ENCODE measurements at regions of chr6 and their contacts with region 1.

Region 1: DNA sequence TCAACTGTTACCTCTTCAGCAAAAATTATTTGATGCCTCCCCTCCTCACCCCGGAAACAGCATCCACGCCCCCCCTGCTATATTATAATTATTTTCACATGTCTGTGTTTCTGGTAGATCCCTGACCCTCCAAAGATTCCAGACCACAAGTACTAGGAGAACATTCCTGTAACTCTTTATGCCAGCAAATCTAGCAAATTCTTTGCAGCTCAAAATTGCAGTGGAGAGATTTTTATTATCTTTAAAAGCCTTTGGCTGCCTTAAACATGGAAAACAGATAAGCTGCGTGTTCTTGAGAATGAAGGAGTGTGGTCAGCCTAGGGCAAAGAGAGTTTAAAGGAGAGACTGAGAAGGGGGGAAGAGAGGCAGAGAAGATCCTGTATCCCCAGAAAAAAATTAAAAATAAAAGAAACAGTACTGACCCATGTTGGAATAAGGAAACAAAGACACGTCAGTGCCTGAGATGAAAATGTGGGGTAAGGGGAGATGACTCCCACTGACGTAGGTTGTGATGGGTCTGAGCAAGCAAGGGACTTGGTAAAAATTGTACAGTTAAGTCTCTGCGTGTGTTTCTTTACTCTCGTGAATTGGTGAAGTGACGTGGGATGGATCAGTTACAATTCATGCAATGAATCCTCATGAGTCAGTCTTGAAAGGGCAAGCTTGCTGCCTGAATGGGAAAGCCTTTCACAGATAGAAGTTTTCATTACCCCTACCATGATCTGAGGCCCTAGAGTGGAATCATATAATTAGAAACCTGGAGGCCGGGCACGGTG is 8.3 kb downstream of the ID4 start:
- DNase-seq: no peak
- ATAC-seq: peak; percentile 58 to 76
- H3K4me3 ChIP-seq: no peak overlapping the region
- H3K27ac ChIP-seq: peak overlapping the region; percentile 81
- H3K4me1 ChIP-seq: peaks cover 3% of the 10 kb centered on the region
- H3K27me3 ChIP-seq: no peaks in the 10 kb centered on the region

Region 2: GRCh38 chr6:19812512-19813119 is 32.8 kb before region 1 on chr6:
- intact Hi-C with region 1: loop called in 1 of 4 experiments (anchors 5 kb)
- DNase-seq: no peak
- ATAC-seq: peak; percentile 72 to 74
- H3K4me3 ChIP-seq: no peak overlapping the region
- H3K27ac ChIP-seq: no peak overlapping the region
- H3K4me1 ChIP-seq: no peaks in the 10 kb centered on the region
- H3K27me3 ChIP-seq: no peaks in the 10 kb centered on the region

Region 3: DNA sequence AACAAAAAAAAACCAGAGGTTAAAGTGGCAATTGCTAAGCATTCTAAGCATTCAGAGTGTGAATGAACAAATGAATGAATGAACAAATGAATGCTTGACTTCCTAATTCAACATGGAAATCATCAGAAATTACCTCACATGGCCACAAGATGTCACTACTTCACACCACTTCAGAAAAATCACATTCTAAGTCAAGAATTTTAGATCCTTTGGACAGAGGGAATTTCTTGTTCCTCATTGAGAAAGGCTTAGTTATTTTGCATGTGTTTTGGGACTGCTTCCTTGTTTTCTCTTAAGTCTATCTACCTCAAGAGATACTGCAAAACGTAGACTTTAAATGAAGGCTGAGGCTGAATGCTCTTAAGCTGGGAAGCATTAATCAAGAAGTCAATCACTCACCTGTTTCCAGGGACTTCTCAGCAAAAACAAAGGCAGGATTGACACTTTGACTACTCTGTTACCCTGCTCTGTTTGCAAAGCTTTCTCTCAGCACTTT is 246.7 kb after region 1 on chr6:
- intact Hi-C with region 1: no loop called
- DNase-seq: no peak
- ATAC-seq: no peak
- H3K4me3 ChIP-seq: no peak overlapping the region
- H3K27ac ChIP-seq: no peak overlapping the region
- H3K4me1 ChIP-seq: no peaks in the 10 kb centered on the region
- H3K27me3 ChIP-seq: no peaks in the 10 kb centered on the region

Region 4: GRCh38 chr6:20279608-20280287 is 434.3 kb after region 1 on chr6:
- intact Hi-C with region 1: no loop called
- DNase-seq: no peak
- ATAC-seq: no peak
- H3K4me3 ChIP-seq: no peak overlapping the region
- H3K27ac ChIP-seq: no peak overlapping the region
- H3K4me1 ChIP-seq: no peaks in the 10 kb centered on the region
- H3K27me3 ChIP-seq: no peaks in the 10 kb centered on the region